ENCODE measurements at regions of chr1 and their contacts with region 1.

Region 1: DNA sequence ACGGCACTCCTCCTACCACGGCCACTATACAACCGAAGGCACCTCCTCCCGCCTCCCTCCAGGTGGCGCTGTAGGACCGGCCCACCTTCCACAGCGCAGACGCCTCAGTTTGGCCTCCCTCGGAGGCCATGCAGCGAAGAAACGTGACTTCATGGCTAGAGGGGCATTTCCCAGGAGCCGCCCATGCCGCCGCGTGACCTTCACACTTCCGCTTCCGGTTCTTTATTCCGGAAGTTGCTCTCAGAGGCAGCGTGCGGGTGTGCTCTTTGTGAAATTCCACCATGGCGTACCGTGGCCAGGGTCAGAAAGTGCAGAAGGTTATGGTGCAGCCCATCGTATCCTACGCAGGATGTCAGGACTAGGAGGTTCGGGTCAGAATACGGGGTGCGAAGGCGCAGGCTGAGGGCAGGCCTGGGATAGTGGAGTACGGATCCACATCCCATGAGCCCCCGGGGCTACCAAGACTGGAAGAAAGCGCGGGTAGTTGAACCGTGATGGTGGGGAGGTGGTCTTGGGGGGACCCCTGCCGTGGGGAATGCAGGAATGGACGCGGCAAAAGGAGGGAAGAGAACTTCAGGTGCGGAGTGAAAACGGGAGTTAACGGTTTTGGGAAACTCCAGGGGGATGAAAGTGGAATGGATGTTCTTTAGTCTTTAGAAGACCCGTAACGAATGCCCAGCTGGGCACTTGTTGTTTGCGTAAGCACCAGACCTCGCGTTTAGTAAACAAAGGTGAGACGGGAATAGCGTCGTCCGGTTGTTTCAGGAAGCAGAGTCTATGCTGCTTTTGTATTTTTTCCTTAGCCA is at the start of gene SNRPE:
- DNase-seq: peak; percentile 91 to 99 (median 96)
- ATAC-seq: peak; percentile 98
- H3K4me3 ChIP-seq: peak within 1 kb of the TSS; percentile 92 to 97
- H3K4me3 Mint-ChIP-seq: peak within 1 kb of the TSS; percentile 97
- H3K27ac ChIP-seq: peak within 1 kb of the TSS; percentile 80 to 86
- H3K27ac Mint-ChIP-seq: peak within 1 kb of the TSS; percentile 96
- H3K4me1 ChIP-seq: peaks cover 11% of the 10 kb centered on the region
- H3K4me1 Mint-ChIP-seq: peaks cover 21% of the 10 kb centered on the region
- H3K27me3 ChIP-seq: no peaks in the 10 kb centered on the region
- H3K27me3 Mint-ChIP-seq: no peaks in the 10 kb centered on the region
- CTCF ChIP-seq: peak; percentile 91
- total RNA-seq, gene SNRPE: 66.5 to 84.0 TPM

Region 2: DNA sequence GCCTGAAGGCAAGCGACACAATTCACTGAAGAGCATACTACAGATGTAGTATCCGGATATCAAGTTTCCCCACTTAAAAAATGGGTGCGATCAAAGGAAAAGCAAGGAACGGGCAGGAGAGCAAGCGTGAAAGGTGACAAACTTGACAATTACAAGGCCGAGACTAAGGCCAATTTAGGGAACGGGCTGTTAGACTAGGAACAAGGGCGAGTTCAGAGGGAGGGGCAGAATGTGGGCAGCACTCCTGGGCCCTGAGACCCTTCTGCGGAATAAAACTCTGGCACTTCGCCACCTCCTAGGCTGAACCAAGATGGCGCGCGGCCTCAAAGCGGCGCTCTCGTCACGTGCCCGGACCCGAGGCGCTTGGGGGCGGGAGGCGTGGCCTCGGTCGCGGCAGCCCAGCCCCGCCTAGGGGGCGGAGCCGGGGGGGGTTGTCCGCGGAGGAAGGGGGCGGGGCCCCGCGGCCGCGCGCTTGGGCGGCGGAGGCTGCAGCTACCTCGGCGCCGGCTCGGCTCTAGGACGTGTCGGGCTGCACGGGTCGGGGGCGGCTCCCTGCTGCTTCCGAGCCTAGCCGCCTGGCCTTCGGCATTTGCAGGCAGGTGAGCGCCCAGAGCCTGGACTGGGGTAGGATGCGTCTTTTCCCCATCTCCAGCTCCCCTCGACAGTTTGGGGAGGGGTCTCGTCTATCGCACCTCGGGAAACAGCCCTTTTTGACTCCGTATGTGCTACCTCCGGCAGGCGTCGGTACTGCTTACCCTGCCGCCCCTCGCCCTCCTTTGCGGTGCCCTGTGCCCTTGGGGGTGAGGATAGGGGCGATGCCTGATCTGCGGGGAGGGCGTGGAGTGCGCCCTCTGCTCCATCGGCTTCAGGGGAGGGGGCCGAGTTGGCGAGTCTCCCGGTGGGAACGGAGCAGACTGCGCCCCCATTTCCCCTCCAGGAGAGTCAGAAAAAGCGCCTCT is 835.3 kb before region 1 on chr1 and contains the start of gene PPFIA4:
- CTCF ChIA-PET with region 1: no interaction called
- POLR2A ChIA-PET with region 1: no interaction called
- intact Hi-C with region 1: loop called in 1 of 2 experiments (anchors 10 kb)
- DNase-seq: peak; percentile 77 to 93 (median 86)
- ATAC-seq: peak; percentile 94
- H3K4me3 ChIP-seq: peak within 1 kb of the TSS; percentile 79 to 98
- H3K4me3 Mint-ChIP-seq: peak within 1 kb of the TSS; percentile 79
- H3K27ac ChIP-seq: peak within 1 kb of the TSS; percentile 46 to 69
- H3K27ac Mint-ChIP-seq: peak within 1 kb of the TSS; percentile 56
- H3K4me1 ChIP-seq: peaks cover 11% of the 10 kb centered on the region
- H3K4me1 Mint-ChIP-seq: peaks cover 8% of the 10 kb centered on the region
- H3K27me3 ChIP-seq: peaks cover 0 to 2% of the 10 kb centered on the region in 2 experiments
- H3K27me3 Mint-ChIP-seq: no peaks in the 10 kb centered on the region
- CTCF ChIP-seq: no peak
- total RNA-seq, gene PPFIA4: 0.33 to 1.1 TPM

Region 3: GRCh38 chr1:203795441-203796235 is 65.9 kb before region 1 on chr1 and contains the starts of genes ZBED6 and ZC3H11A:
- CTCF ChIA-PET with region 1: no interaction called
- POLR2A ChIA-PET with region 1: no interaction called
- intact Hi-C with region 1: loop called (anchors 1 kb)
- DNase-seq: peak; percentile 96 to 100 (median 97)
- ATAC-seq: peak; percentile 96
- H3K4me3 ChIP-seq: peak within 1 kb of the TSS; percentile 67 to 73
- H3K4me3 Mint-ChIP-seq: peak within 1 kb of the TSS; percentile 96
- H3K27ac ChIP-seq: peak within 1 kb of the TSS; percentile 54 to 92
- H3K27ac Mint-ChIP-seq: peak within 1 kb of the TSS; percentile 97
- H3K4me1 ChIP-seq: peaks cover 42% of the 10 kb centered on the region
- H3K4me1 Mint-ChIP-seq: peaks cover 53% of the 10 kb centered on the region
- H3K27me3 ChIP-seq: no peaks in the 10 kb centered on the region
- H3K27me3 Mint-ChIP-seq: no peaks in the 10 kb centered on the region
- CTCF ChIP-seq: no peak
- total RNA-seq, gene ZBED6: 25.0 to 25.8 TPM
- total RNA-seq, gene ZC3H11A: 72.7 to 77.2 TPM

Region 4: GRCh38 chr1:204151552-204152309 is 290.1 kb after region 1 on chr1 and contains the start of gene ETNK2:
- CTCF ChIA-PET with region 1: no interaction called
- POLR2A ChIA-PET with region 1: no interaction called
- intact Hi-C with region 1: loop called in 1 of 2 experiments (anchors 1 kb)
- DNase-seq: peak; percentile 26 to 79 (median 59)
- ATAC-seq: peak; percentile 88
- H3K4me3 ChIP-seq: peak within 1 kb of the TSS; percentile 63 to 70
- H3K4me3 Mint-ChIP-seq: peak within 1 kb of the TSS; percentile 75
- H3K27ac ChIP-seq: peak within 1 kb of the TSS in 1 of 2 experiments; percentile 44
- H3K27ac Mint-ChIP-seq: peak within 1 kb of the TSS; percentile 77
- H3K4me1 ChIP-seq: peaks cover 13% of the 10 kb centered on the region
- H3K4me1 Mint-ChIP-seq: peaks cover 9% of the 10 kb centered on the region
- H3K27me3 ChIP-seq: no peaks in the 10 kb centered on the region
- H3K27me3 Mint-ChIP-seq: no peaks in the 10 kb centered on the region
- CTCF ChIP-seq: no peak
- total RNA-seq, gene ETNK2: 13.4 to 17.0 TPM

Region 5: DNA sequence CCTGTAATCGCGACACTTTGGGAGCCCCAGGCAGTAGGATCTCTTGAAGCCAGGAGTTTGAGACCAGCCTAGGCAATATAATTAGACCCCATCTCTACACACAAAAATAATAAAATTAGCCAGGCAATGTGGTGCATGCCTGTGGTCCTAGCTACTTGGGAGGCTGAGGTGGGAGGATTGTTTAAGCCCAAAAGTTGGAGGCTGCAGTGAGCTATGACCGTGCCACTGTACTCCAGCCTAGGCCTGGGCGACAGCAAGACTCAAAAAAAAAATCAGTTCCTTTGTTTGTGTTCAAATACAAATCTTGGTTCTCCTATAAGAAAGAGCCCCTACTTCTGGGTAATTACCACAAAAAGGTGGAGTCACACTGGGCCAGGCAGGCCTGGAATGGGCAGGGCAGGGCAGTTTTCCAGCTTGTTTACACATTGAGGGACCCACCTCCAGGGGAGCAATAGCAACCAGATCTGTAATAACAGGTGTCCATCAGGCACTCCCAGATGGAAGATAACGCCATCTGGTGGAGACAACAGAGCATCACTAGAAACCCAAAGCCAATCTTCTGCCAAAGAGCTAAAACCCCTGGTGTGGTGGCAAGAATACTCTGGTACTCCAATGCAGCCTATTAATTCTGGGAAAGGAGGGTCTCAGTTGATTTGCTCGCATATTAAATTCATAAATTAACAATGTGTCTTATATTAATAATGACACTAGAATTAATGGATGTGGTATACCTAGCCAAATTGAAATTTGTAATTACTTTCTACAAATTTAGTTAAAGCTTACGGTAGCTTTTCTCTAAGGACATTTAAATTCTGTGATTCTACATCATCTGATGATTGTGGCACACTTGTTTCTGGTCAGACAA is 536.9 kb after region 1 on chr1:
- CTCF ChIA-PET with region 1: no interaction called
- POLR2A ChIA-PET with region 1: no interaction called
- intact Hi-C with region 1: loop called in 1 of 2 experiments (anchors 5 kb)
- DNase-seq: peak; percentile 16 to 86 (median 54)
- ATAC-seq: peak; percentile 97
- H3K4me3 ChIP-seq: no peak overlapping the region
- H3K4me3 Mint-ChIP-seq: no peak overlapping the region
- H3K27ac ChIP-seq: peak overlapping the region in 1 of 2 experiments; percentile 21
- H3K27ac Mint-ChIP-seq: peak overlapping the region; percentile 80
- H3K4me1 ChIP-seq: peaks cover 4% of the 10 kb centered on the region
- H3K4me1 Mint-ChIP-seq: peaks cover 9% of the 10 kb centered on the region
- H3K27me3 ChIP-seq: no peaks in the 10 kb centered on the region
- H3K27me3 Mint-ChIP-seq: no peaks in the 10 kb centered on the region
- CTCF ChIP-seq: peak; percentile 87

Region 6: GRCh38 chr1:205121660-205122488 is 1260.3 kb after region 1 on chr1 and contains the start of gene RBBP5:
- CTCF ChIA-PET with region 1: no interaction called
- POLR2A ChIA-PET with region 1: no interaction called
- intact Hi-C with region 1: loop called in 1 of 2 experiments (anchors 5 kb)
- DNase-seq: peak; percentile 92 to 98 (median 95)
- ATAC-seq: peak; percentile 93
- H3K4me3 ChIP-seq: peak within 1 kb of the TSS; percentile 91 to 95
- H3K4me3 Mint-ChIP-seq: peak within 1 kb of the TSS; percentile 96
- H3K27ac ChIP-seq: peak within 1 kb of the TSS; percentile 88 to 97
- H3K27ac Mint-ChIP-seq: peak within 1 kb of the TSS; percentile 100
- H3K4me1 ChIP-seq: peaks cover 26% of the 10 kb centered on the region
- H3K4me1 Mint-ChIP-seq: peaks cover 46% of the 10 kb centered on the region
- H3K27me3 ChIP-seq: no peaks in the 10 kb centered on the region
- H3K27me3 Mint-ChIP-seq: no peaks in the 10 kb centered on the region
- CTCF ChIP-seq: peak; percentile 59
- total RNA-seq, gene RBBP5: 23.9 to 25.7 TPM

Measured in CD8-positive, alpha-beta T cell (primary cell).